Ovary (tissue), 10 donors: ENCODE measurements at regions of chr3 and their contacts with region 1.

Region 1: DNA sequence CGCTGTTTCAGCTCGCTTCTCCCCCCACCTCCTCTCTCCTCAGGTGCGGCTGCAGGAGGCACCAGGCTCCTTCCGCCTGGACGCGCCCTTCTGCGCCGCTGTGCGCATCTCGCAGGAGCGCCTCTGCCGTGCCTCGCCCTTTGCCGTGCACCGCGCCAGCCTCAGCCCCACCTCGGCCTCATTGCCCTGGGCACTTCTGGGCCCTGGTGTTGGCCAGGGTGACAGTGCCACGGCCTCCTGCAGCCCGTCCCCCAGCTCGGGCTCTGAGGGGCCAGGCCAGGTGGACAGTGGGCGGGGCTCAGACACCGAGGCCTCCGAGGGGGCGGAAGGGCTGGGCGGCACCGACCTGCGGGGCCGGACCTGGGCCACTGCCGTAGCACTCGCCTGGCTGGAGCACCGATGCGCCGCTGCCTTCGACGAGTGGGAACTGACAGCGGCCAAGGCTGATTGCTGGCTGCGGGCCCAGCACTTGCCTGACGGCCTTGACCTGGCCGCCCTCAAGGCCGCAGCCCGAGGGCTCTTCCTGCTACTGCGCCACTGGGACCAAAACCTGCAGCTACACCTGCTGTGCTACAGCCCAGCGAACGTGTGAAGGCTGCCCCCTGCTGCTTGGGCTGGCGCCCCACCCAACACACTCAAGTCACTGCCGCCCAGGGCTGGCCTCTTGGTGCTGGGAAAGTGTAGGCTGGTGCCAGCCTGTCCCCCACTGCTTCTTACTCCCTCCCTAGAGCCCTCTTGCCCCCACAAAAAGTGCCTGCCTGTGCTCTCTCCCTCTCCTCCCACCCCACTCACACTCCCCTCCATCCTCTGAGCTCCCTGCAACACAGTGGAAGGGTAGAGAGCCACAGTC is 7.1 kb downstream of the ALG3 start:
- DNase-seq: peak; percentile 71 to 83 (median 73)
- H3K4me3 ChIP-seq: no peak overlapping the region
- H3K27ac ChIP-seq: no peak overlapping the region
- H3K4me1 ChIP-seq: peaks cover 7% of the 10 kb centered on the region
- H3K27me3 ChIP-seq: no peaks in the 10 kb centered on the region
- CTCF ChIP-seq: peak; percentile 21 to 66 (median 50)
- EP300 ChIP-seq: no peak
- POLR2A ChIP-seq: no peak

Region 2: DNA sequence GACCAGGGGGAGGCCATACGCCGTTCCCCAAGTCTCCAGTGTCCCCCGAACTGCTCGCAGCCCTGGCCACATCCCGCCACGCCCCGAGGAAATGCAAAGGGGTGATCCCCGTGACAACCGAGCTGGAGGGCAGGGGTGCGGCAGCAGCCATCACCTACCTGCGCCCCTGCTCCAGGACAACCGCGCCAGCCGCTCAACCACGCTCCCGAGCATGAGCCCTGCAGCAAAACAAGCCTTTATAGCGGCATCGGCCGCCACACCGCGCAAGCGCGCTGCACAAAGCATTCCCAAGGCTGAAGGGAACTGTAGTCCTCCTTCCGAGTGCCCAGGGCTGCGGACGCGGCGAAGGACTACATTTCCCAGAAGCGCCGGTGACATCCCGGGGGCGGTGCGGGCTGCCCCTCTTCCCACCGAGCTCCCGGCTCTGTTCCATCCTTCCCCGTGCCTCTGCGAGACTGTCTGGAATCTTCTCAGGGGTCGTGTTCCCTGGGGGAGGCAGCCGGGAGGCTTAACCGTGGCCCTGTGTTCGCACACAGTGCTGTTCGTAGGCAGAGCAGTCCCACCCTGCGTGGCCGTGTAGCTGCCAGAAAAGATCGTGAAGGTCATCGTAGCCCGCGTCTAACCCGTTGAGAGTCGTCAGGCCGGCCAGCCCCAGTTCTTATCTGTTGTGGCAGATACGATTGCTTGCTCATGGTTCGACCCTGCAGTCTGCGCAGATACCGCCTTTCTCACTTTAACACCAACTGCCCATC is 223.8 kb before region 1 on chr3 and contains the start of gene ABCC5:
- intact Hi-C with region 1: loop called in 1 of 4 experiments (anchors 5 kb)
- DNase-seq: peak; percentile 89 to 94 (median 91)
- H3K4me3 ChIP-seq: peak within 1 kb of the TSS; percentile 100
- H3K27ac ChIP-seq: peak within 1 kb of the TSS; percentile 11 to 73
- H3K4me1 ChIP-seq: no peaks in the 10 kb centered on the region
- H3K27me3 ChIP-seq: no peaks in the 10 kb centered on the region
- CTCF ChIP-seq: peak in 2 of 3 donors; percentile 30 to 59
- EP300 ChIP-seq: no peak
- POLR2A ChIP-seq: no peak
- total RNA-seq, gene ABCC5: 16.3 to 23.1 (median 19.8) TPM

Region 3: GRCh38 chr3:184085389-184085852 is 156.3 kb before region 1 on chr3:
- intact Hi-C with region 1: no loop called
- DNase-seq: no peak
- H3K4me3 ChIP-seq: no peak overlapping the region
- H3K27ac ChIP-seq: no peak overlapping the region
- H3K4me1 ChIP-seq: no peaks in the 10 kb centered on the region
- H3K27me3 ChIP-seq: no peaks in the 10 kb centered on the region
- CTCF ChIP-seq: no peak
- EP300 ChIP-seq: no peak
- POLR2A ChIP-seq: no peak

Region 4: DNA sequence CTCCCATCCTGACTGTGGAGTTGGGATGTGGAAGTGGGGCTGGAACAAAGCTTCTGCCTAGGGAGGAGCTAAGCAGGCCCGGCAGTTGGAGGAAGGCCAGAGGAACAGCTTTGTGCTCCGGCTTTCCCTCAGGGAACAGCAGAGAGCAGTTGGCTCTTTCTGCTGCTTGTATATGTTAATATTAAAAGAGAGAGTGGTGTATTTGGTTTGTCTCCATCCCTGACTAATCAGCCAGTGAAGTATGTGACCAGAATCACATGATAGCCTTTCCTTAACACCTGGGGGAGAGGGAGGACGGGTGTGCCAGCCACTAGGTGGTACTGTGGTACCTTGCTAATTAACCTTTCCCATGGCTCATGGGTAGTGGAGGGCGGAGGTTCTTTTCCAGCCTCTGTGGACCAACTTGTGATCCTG is 96.6 kb before region 1 on chr3:
- intact Hi-C with region 1: loop called in 2 of 4 experiments (anchors 5 to 10 kb)
- DNase-seq: peak in 1 of 5 donors; percentile 38
- H3K4me3 ChIP-seq: no peak overlapping the region
- H3K27ac ChIP-seq: no peak overlapping the region
- H3K4me1 ChIP-seq: no peaks in the 10 kb centered on the region
- H3K27me3 ChIP-seq: no peaks in the 10 kb centered on the region
- CTCF ChIP-seq: no peak
- EP300 ChIP-seq: no peak
- POLR2A ChIP-seq: no peak

Region 5: GRCh38 chr3:184185461-184186308 is 56.0 kb before region 1 on chr3 and contains the start of gene ABCF3:
- intact Hi-C with region 1: loop called in 3 of 4 experiments (anchors 2 to 5 kb)
- DNase-seq: peak; percentile 99 to 100 (median 99)
- H3K4me3 ChIP-seq: peak within 1 kb of the TSS; percentile 85
- H3K27ac ChIP-seq: peak within 1 kb of the TSS; percentile 55 to 73
- H3K4me1 ChIP-seq: peaks cover 4% of the 10 kb centered on the region
- H3K27me3 ChIP-seq: no peaks in the 10 kb centered on the region
- CTCF ChIP-seq: no peak
- EP300 ChIP-seq: no peak
- POLR2A ChIP-seq: peak; percentile 68
- total RNA-seq, gene ABCF3: 56.6 to 82.0 (median 61.7) TPM

Region 6: GRCh38 chr3:184513276-184514170 is 271.9 kb after region 1 on chr3:
- intact Hi-C with region 1: no loop called
- DNase-seq: peak; percentile 84 to 93 (median 90)
- H3K4me3 ChIP-seq: peak overlapping the region; percentile 39
- H3K27ac ChIP-seq: no peak overlapping the region
- H3K4me1 ChIP-seq: peaks cover 2% of the 10 kb centered on the region
- H3K27me3 ChIP-seq: no peaks in the 10 kb centered on the region
- CTCF ChIP-seq: peak; percentile 73 to 88 (median 80)
- EP300 ChIP-seq: no peak
- POLR2A ChIP-seq: no peak